ENCODE measurements at regions of chr2 and their contacts with region 1.

Region 1: GRCh38 chr2:171574149-171574795 is 52.0 kb downstream of the CYBRD1 start:
- DNase-seq: peak; percentile 8
- H3K4me3 ChIP-seq: no peak overlapping the region
- H3K27ac ChIP-seq: no peak overlapping the region
- H3K4me1 ChIP-seq: no peaks in the 10 kb centered on the region
- H3K27me3 ChIP-seq: no peaks in the 10 kb centered on the region
- CTCF ChIP-seq: peak; percentile 93 to 98 (median 97)
- POLR2A ChIP-seq: no peak

Region 2: DNA sequence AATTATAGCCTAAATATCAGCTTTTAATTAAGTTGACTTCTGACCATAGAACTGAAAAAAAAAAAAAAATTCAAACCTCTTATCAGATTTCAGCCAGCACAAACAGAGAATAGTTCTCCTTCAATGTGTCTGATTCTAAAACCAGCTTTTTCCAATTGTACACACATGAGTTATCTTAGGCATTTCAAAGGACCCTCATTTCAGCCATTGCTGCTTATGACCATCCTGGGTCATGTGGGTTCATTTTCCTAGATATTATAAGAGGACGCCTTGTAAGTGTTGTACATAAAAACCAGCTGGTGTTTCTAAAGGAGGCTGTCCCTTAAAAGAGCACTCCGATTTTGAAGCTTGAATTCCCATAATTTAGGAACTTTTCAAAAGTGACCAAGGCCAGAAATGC is 50.7 kb after region 1 on chr2:
- intact Hi-C with region 1: no loop called
- DNase-seq: no peak
- H3K4me3 ChIP-seq: no peak overlapping the region
- H3K27ac ChIP-seq: no peak overlapping the region
- H3K4me1 ChIP-seq: no peaks in the 10 kb centered on the region
- H3K27me3 ChIP-seq: peaks cover 0 to 2% (median 0%) of the 10 kb centered on the region in 4 donors
- CTCF ChIP-seq: no peak
- POLR2A ChIP-seq: no peak

Region 3: DNA sequence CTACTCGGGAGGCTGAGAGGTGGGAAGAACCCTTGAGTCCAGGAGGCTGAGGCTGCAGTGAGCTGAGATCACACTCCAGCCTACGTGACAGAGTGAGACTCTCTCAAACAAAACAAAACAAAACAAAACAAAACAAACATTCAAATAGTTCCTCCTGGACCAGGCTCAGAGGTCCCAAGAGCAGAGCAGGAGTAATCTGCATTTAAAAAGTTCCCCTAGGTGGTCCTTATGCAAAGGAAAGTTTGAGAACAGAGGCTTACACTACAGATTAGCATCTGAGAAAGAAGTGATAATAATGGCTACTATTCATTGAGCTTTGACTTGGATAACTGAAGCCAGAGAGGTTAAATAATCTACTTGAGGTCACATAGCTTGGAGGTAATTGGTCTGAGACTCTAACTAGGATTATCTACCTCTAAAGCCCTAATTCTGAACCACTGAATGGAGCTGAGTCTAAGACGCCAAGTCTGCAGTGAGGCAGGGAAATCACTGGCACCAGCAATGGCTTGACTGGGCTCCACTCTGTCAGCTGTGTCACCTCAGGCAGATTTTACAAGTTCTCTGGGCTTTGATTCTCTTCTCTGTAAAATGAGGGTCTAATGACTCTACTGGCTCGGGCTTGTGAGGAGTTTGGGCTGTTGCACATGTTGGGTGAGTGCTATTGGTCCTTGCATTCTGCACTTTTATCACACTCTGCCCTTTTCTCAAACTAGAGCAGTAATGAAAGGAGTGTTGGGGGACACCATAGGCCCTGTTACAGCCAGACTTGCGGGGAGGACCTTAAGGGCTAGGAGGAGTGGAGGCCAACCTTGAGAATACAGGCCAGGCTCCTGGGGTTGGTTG is 557.7 kb after region 1 on chr2:
- intact Hi-C with region 1: loop called (anchors 10 kb)
- DNase-seq: no peak
- H3K4me3 ChIP-seq: no peak overlapping the region
- H3K27ac ChIP-seq: no peak overlapping the region
- H3K4me1 ChIP-seq: no peaks in the 10 kb centered on the region
- H3K27me3 ChIP-seq: peaks cover 0 to 7% (median 0%) of the 10 kb centered on the region in 4 donors
- CTCF ChIP-seq: no peak
- POLR2A ChIP-seq: no peak

Measured in esophagus squamous epithelium (tissue), 5 donors.